BJ (cell line): ENCODE measurements at regions of chr14 and their contacts with region 1.

Region 1: DNA sequence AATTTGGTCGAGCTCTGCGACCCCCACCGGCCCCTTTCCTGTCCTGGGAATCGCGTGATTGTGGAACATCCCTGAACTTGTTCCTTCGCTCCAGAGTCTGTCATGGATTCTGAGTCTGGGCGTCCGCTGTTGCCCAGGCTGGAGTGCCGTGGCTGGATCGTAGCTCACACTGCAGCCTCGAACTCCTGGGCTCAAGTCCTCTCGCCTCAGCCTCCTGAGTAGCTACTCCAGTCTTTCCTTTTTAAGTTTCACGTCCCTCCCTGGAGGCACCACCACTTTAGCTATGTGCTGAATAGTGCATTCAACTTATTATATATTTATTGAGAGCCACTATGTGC is 698 bp downstream of the ACOT6 start:
- DNase-seq: no peak
- H3K4me3 ChIP-seq: peak overlapping the region; percentile 57
- H3K27me3 ChIP-seq: no peaks in the 10 kb centered on the region
- CTCF ChIP-seq: no peak

Region 2: DNA sequence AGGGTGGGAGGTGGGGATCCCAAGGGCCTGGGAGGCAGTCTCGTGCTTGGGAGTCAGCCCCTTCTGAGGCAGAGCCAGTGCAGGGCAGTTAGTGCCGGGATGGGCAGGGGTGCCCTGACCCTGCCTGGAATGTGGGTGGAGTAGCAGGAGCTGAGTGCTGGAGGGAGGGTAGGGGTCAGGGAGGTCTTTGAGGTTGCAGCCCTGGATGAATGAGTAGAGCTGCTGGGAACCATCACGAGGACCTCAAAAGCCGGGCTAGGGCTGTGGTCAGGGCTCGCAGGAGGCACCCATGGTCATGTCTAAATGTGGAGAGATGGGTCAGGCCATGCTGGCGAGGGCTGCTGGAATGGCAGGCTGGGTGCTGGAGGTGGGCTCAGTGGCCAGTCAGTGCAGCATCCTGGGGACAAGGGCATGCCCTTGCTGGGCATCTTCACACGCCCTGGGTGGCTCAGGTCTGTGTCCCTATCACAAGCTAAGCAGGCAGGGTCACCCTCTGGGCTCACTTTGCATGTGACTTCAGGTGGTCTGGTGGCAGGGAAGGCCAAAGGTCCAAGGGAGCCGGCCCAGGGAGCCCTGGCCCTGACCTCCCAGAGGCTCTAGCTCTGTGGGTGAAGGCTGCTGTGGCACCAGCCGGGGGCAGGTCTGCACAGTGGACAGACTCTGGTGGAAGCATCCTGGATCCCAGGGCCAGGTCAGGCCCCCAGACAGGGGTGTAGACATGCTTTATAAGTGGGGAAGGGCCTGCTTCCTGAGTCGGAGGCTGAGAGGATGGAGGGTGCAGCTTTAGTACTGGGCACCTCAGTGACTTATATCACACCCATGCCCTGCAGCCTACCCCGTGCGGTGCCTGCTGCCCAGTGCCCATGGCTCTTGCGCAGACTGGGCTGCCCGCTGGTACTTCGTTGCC is 351.2 kb before region 1 on chr14:
- CTCF ChIA-PET with region 1: no interaction called
- POLR2A ChIA-PET with region 1: interaction called, 16 read pairs
- DNase-seq: no peak
- H3K4me3 ChIP-seq: no peak overlapping the region
- H3K27me3 ChIP-seq: no peaks in the 10 kb centered on the region
- CTCF ChIP-seq: no peak

Region 3: GRCh38 chr14:73627151-73627558 is 14.1 kb after region 1 on chr14:
- CTCF ChIA-PET with region 1: interaction called, 6 read pairs
- POLR2A ChIA-PET with region 1: interaction called, 15 read pairs
- DNase-seq: no peak
- H3K4me3 ChIP-seq: no peak overlapping the region
- H3K27me3 ChIP-seq: no peaks in the 10 kb centered on the region
- CTCF ChIP-seq: no peak